ENCODE measurements at regions of chr22 and their contacts with region 1.

Region 1: GRCh38 chr22:36409911-36410756 is 22.4 kb upstream of the MYH9 start:
- DNase-seq: peak; percentile 58 to 80 (median 64)
- H3K4me3 ChIP-seq: peak overlapping the region in 1 of 2 donors; percentile 44
- H3K4me3 Mint-ChIP-seq: peak overlapping the region; percentile 61 to 79 (median 72)
- H3K27ac ChIP-seq: peak overlapping the region; percentile 49
- H3K27ac Mint-ChIP-seq: peak overlapping the region; percentile 86 to 96 (median 91)
- H3K4me1 ChIP-seq: peaks cover 65% of the 10 kb centered on the region
- H3K4me1 Mint-ChIP-seq: peaks cover 35 to 68% (median 52%) of the 10 kb centered on the region in 4 donors
- H3K27me3 ChIP-seq: no peaks in the 10 kb centered on the region
- H3K27me3 Mint-ChIP-seq: no peaks in the 10 kb centered on the region

Region 2: DNA sequence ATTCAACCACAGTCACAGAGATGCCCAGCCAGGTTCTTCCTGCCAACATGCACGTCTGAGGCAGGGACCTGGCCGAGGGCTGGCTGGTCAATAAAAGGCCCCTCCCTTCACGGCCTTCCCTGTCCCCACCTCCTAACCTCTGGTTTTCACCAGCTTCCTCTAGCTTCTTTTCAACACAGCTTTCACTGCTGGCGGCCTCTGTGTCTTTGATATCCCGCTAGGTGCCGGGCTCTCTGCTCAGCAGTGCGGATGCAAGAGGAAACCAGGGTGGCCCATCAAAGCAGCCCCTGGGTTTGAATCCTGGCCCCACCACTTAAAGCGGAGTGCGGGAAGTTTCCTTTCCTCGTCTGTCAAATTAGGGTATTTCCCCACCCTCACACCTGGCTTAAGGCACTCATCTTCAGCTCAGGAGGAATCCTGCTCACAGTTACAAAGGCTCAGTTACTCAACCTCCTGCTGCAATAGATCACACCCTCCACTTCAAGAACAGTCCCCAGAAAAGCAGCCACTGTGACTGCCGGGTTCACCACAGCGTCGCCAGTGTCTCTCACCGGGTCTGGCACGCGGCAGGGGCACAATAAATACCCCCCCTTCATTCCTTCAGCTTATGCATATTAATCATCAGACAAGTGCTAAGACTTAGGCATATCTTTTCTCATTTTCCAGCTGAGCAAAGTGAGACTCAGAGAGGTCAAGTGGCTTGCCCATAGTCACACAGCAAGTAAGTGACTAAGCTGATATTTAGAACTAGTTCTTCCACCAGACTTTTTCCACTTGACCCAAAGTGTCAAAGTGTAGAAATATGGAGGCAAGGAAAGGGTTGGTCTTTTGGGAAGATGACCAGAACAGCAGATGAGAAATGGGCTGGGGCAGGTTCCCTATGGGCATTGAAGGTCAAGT is 25.6 kb after region 1 on chr22:
- CTCF ChIA-PET with region 1: interaction called, 10 read pairs
- POLR2A ChIA-PET with region 1: interaction called, 11 read pairs
- intact Hi-C with region 1: no loop called
- DNase-seq: peak; percentile 68 to 92 (median 76)
- H3K4me3 ChIP-seq: no peak overlapping the region
- H3K4me3 Mint-ChIP-seq: peak overlapping the region in 7 of 8 donors; percentile 60 to 84 (median 73)
- H3K27ac ChIP-seq: peak overlapping the region; percentile 57
- H3K27ac Mint-ChIP-seq: peak overlapping the region; percentile 82 to 97 (median 93)
- H3K4me1 ChIP-seq: peaks cover 29% of the 10 kb centered on the region
- H3K4me1 Mint-ChIP-seq: peaks cover 16 to 36% (median 25%) of the 10 kb centered on the region in 4 donors
- H3K27me3 ChIP-seq: no peaks in the 10 kb centered on the region
- H3K27me3 Mint-ChIP-seq: no peaks in the 10 kb centered on the region

Region 3: GRCh38 chr22:36528795-36529751 is 118.9 kb after region 1 on chr22 and contains the start of gene EIF3D:
- CTCF ChIA-PET with region 1: no interaction called
- POLR2A ChIA-PET with region 1: no interaction called
- intact Hi-C with region 1: no loop called
- DNase-seq: peak; percentile 98 to 100 (median 99)
- H3K4me3 ChIP-seq: peak within 1 kb of the TSS; percentile 79 to 94
- H3K4me3 Mint-ChIP-seq: peak within 1 kb of the TSS; percentile 89 to 97 (median 95)
- H3K27ac ChIP-seq: peak within 1 kb of the TSS; percentile 87
- H3K27ac Mint-ChIP-seq: peak within 1 kb of the TSS; percentile 95 to 99 (median 99)
- H3K4me1 ChIP-seq: peaks cover 20% of the 10 kb centered on the region
- H3K4me1 Mint-ChIP-seq: peaks cover 11 to 30% (median 16%) of the 10 kb centered on the region in 4 donors
- H3K27me3 ChIP-seq: no peaks in the 10 kb centered on the region
- H3K27me3 Mint-ChIP-seq: peaks cover 1% of the 10 kb centered on the region in 2 donors
- total RNA-seq, gene EIF3D: 222 to 228 TPM